MCF 10A (cell line): ENCODE measurements at regions of chr14 and their contacts with region 1.

Region 1: GRCh38 chr14:32469388-32470160 is 140.5 kb downstream of the AKAP6 start:
- DNase-seq: peak; percentile 50
- H3K4me3 Mint-ChIP-seq: no peak overlapping the region
- H3K27ac Mint-ChIP-seq: peak overlapping the region; percentile 76
- H3K4me1 Mint-ChIP-seq: peaks cover 47% of the 10 kb centered on the region
- H3K27me3 Mint-ChIP-seq: no peaks in the 10 kb centered on the region
- CTCF ChIP-seq: peak; percentile 45

Region 2: DNA sequence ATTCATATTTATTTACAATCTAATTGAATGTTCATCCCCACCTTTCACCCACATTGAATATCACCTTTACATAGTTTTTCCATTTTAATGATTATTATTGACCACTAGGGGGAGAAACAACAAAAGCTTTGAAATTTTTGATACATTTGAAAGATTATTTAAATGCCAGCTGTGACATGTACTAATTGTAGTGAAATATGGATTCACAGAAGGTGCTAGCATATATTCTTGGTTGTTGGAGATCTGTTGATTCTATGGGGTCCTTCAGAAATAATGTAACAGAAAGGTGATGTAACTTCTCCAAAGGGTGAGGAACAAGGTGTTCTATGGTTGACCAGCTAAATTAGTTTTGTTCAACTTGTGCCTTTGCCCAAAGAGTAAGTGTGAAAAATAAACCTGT is 959.4 kb before region 1 on chr14:
- CTCF ChIA-PET with region 1: interaction called, 3 read pairs
- POLR2A ChIA-PET with region 1: no interaction called
- intact Hi-C with region 1: loop called (anchors 2 kb)
- DNase-seq: peak; percentile 43
- H3K4me3 Mint-ChIP-seq: no peak overlapping the region
- H3K27ac Mint-ChIP-seq: no peak overlapping the region
- H3K4me1 Mint-ChIP-seq: peaks cover 8% of the 10 kb centered on the region
- H3K27me3 Mint-ChIP-seq: no peaks in the 10 kb centered on the region
- CTCF ChIP-seq: peak; percentile 44

Region 3: GRCh38 chr14:32202998-32203882 is 266.3 kb before region 1 on chr14 and contains the start of gene RNU6-8:
- CTCF ChIA-PET with region 1: no interaction called
- POLR2A ChIA-PET with region 1: interaction called, 3 read pairs
- intact Hi-C with region 1: loop called (anchors 1 kb)
- DNase-seq: peak; percentile 87
- H3K4me3 Mint-ChIP-seq: peak within 1 kb of the TSS; percentile 89
- H3K27ac Mint-ChIP-seq: peak within 1 kb of the TSS; percentile 98
- H3K4me1 Mint-ChIP-seq: peaks cover 21% of the 10 kb centered on the region
- H3K27me3 Mint-ChIP-seq: no peaks in the 10 kb centered on the region
- CTCF ChIP-seq: no peak
- total RNA-seq, gene RNU6-8: not detected in 2 replicates

Region 4: GRCh38 chr14:32259368-32260013 is 210.1 kb before region 1 on chr14:
- CTCF ChIA-PET with region 1: interaction called, 14 read pairs
- POLR2A ChIA-PET with region 1: interaction called, 15 read pairs
- intact Hi-C with region 1: loop called (anchors 1 kb)
- DNase-seq: peak; percentile 73
- H3K4me3 Mint-ChIP-seq: no peak overlapping the region
- H3K27ac Mint-ChIP-seq: peak overlapping the region; percentile 14
- H3K4me1 Mint-ChIP-seq: peaks cover 11% of the 10 kb centered on the region
- H3K27me3 Mint-ChIP-seq: no peaks in the 10 kb centered on the region
- CTCF ChIP-seq: no peak

Region 5: DNA sequence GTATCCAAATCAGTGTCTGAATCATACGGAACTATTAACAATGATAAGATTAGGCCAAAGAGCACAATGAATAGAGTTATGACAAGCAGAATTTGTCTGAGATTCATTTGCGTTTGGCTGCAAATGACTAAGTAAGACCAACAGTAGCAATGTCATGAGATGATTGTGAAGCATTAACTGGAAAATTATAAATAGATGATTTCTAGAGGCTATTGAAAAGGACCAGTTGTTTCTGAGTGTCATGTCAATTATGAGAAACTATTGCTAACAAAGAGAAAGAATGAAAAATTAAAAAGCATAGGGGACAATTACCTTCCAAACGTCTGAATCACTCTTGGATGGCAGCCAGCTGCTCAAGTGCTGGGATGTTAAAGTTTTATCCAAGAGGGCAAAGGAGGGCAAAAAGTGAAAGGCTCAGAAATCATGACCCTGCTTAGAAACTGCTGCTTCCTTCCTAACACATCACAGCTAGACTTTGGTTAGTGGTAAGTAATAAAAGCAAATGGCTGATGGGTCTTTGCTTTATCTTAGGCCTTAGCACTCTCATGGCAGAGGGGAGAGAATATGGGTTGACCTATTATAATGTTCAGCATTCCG is 51.5 kb before region 1 on chr14:
- CTCF ChIA-PET with region 1: no interaction called
- POLR2A ChIA-PET with region 1: no interaction called
- intact Hi-C with region 1: no loop called
- DNase-seq: peak; percentile 86
- H3K4me3 Mint-ChIP-seq: no peak overlapping the region
- H3K27ac Mint-ChIP-seq: no peak overlapping the region
- H3K4me1 Mint-ChIP-seq: peaks cover 6% of the 10 kb centered on the region
- H3K27me3 Mint-ChIP-seq: no peaks in the 10 kb centered on the region
- CTCF ChIP-seq: no peak

Region 6: DNA sequence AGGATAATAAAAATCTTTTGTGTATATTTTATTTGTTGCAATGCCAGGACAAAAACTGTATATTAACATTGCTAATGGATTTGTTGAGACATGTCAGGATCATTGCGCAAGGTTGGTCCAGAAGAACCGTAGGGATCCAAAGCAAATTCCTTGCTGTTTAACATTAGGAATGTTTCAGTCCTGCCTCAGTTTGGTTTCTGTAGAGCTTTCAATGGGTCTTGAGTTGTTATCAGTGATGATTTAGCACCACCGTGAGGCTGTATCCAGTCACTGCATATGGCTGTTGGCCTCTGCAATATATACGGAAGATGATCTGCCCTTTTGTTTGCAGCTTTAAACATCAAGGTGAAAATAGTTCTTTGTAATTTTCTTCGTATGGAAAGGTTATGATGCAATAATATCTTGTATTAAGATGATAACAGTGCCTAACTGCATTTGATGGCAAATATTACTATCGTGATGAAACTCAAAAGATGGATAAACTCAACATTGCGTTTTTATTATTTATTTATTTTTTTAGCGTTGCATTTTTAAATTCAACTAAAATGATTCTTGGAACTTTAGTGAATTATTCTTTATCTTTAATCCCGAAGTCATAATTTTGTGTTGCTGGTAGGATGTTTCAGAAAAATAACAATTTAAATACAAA is 90.8 kb after region 1 on chr14:
- CTCF ChIA-PET with region 1: interaction called, 5 read pairs
- POLR2A ChIA-PET with region 1: interaction called, 22 read pairs
- intact Hi-C with region 1: loop called (anchors 1 kb)
- DNase-seq: peak; percentile 85
- H3K4me3 Mint-ChIP-seq: no peak overlapping the region
- H3K27ac Mint-ChIP-seq: no peak overlapping the region
- H3K4me1 Mint-ChIP-seq: peaks cover 10% of the 10 kb centered on the region
- H3K27me3 Mint-ChIP-seq: no peaks in the 10 kb centered on the region
- CTCF ChIP-seq: peak; percentile 77